GM12878 (cell line): ENCODE measurements at regions of chr7 and their contacts with region 1.

Region 1: DNA sequence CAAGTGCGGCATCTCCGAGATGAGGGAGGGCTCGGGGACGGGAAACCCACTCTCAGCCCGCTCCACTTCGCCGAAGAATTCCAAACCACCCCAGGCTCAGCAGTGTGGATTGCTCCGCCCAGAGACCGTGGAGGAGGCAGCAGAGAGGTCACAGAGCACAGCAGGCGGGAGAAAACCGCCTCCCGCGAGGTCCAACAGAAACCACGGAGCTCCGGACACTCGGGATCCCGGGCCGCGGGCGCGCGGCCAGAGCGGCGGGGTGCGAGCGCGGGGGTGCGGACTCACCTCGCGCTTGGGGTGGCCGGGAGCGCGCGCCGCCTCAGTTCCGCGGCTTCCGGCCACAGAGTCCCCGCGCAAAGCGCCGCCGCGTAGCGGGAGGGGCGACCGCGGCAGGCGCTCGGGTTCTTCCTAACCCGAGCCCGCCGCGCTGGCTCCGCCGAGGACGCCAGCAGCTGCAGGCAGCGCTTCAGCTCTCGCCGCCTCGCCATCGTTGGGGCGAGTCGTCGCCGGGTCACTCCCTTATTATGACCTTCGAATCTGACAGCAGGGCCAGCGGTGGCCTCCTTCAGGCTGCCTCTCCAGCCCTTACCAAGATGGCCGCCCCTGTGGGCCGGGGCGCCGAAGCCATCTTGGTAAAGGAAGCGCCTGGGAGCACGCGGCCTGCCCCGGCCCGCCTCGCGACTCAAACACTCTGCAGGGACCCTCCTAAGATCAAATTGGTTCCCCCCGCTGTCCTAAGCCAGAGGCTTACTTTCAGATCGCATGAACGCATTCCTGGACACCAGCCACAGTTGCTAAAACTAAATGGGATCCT is at the start of gene NAPEPLD:
- DNase-seq: peak; percentile 53
- ATAC-seq: peak; percentile 90
- H3K4me3 ChIP-seq: peak within 1 kb of the TSS; percentile 73
- H3K27ac ChIP-seq: peak within 1 kb of the TSS; percentile 98
- H3K4me1 ChIP-seq: peaks cover 3% of the 10 kb centered on the region; the same call in 1 of the 2 replicates
- H3K27me3 ChIP-seq: no peaks in the 10 kb centered on the region
- CTCF ChIP-seq: no peak
- EP300 ChIP-seq: no peak
- POLR2A ChIP-seq: peak; percentile 85
- RAD21 ChIP-seq: no peak
- polyA plus RNA-seq, gene NAPEPLD: 6.0 to 8.5 TPM

Region 2: DNA sequence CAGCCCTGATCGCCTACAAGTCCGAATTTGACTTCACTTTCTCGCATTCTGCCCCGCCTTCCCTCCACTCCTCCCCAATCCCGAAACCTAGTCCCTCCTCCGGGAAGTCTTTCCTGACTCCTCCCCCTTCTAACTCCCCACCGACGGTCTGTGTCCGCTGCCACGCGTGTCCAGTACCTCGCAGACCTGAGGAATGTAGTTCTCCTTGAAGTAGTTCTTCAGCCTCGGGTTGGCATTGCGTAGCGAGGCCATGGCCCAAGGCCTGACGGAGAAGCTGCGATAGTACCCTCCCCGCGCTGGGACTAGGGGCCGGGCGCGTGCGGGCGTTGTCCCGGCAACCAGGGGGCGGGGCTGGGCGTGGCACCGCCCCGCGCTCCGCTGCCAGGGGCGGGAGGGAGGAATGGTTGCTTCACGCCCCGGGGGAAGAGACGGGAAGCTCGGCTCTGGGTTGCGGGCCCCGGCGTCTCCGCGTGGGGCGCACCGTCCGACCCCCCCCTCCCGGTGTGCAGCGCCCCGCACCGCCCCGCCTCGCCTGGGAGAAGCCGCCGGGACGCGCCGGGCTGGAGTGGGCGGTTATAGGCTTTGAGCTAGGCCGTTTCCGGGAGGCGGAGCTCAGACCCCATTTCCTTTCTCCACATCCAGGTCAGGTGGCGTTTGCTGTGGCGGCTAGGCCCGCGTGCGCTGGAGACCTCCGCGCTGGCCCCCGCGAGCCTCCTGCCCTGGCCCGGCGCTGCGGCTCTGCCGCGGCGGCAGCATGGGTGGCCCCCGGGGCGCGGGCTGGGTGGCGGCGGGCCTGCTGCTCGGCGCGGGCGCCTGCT is 74.5 kb before region 1 on chr7 and contains the starts of genes ARMC10 and FBXL13:
- CTCF ChIA-PET with region 1: interaction called, 4 read pairs
- POLR2A ChIA-PET with region 1: interaction called, 17 read pairs
- RAD21 ChIA-PET with region 1: interaction called, 15 read pairs
- SMC1A ChIA-PET with region 1: interaction called, 4 read pairs
- in situ Hi-C with region 1: no loop called
- intact Hi-C with region 1: loop called (anchors 2 kb)
- DNase-seq: peak; percentile 46
- ATAC-seq: peak; percentile 94
- H3K4me3 ChIP-seq: peak within 1 kb of the TSS; percentile 90
- H3K27ac ChIP-seq: peak within 1 kb of the TSS; percentile 77
- H3K4me1 ChIP-seq: peaks cover 2% of the 10 kb centered on the region
- H3K27me3 ChIP-seq: no peaks in the 10 kb centered on the region
- CTCF ChIP-seq: no peak
- EP300 ChIP-seq: 0 out of 4 replicates have a peak, but pooled peaks of 1 of the 2 experiments have one; percentile 25
- POLR2A ChIP-seq: peak; percentile 91
- RAD21 ChIP-seq: no peak
- polyA plus RNA-seq, gene ARMC10: 7.0 to 13.4 TPM
- polyA plus RNA-seq, gene FBXL13: 0.08 to 0.16 TPM